ENCODE measurements at regions of chr13 and their contacts with region 1.

Region 1: DNA sequence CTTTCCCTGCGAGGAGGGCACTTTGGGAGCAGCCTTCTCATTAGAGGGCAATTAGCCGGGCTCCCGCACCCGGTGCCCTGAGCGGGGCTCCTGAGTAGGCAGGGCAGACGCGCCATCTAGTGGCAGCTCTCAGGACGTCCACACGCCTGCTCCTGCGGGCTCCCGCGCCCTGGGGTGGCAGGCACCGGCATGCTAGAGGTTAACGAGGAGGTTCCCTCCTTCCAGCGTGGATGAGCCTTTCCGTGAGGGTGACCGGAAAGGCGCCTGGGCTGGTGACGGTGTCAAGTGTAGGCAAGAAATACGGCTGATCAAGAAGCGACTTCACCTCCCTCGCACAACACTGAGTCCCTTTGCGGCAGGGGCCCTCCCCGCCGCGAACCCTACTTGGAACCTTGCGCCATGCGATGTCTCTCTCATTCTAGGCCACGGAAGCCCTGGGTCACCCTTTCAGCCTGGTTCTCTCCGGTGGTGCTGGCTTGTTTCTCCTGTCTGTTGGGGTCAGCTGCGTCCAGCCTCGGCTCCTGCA is 67.7 kb downstream of the ALOX5AP start:
- DNase-seq: peak; percentile 65 to 74 (median 68)
- ATAC-seq: peak; percentile 100
- H3K4me3 ChIP-seq: no peak overlapping the region
- H3K27ac ChIP-seq: no peak overlapping the region
- H3K4me1 ChIP-seq: peaks cover 0 to 6% of the 10 kb centered on the region in 2 experiments; a peak in 2 of 5 replicates
- H3K27me3 ChIP-seq: peaks cover 5 to 35% of the 10 kb centered on the region in 2 experiments; a peak in 4 of 5 replicates
- CTCF ChIP-seq: peak; percentile 73 to 80 (median 75)
- EP300 ChIP-seq: no peak
- POLR2A ChIP-seq: no peak
- RAD21 ChIP-seq: peak; percentile 76 to 86

Region 2: DNA sequence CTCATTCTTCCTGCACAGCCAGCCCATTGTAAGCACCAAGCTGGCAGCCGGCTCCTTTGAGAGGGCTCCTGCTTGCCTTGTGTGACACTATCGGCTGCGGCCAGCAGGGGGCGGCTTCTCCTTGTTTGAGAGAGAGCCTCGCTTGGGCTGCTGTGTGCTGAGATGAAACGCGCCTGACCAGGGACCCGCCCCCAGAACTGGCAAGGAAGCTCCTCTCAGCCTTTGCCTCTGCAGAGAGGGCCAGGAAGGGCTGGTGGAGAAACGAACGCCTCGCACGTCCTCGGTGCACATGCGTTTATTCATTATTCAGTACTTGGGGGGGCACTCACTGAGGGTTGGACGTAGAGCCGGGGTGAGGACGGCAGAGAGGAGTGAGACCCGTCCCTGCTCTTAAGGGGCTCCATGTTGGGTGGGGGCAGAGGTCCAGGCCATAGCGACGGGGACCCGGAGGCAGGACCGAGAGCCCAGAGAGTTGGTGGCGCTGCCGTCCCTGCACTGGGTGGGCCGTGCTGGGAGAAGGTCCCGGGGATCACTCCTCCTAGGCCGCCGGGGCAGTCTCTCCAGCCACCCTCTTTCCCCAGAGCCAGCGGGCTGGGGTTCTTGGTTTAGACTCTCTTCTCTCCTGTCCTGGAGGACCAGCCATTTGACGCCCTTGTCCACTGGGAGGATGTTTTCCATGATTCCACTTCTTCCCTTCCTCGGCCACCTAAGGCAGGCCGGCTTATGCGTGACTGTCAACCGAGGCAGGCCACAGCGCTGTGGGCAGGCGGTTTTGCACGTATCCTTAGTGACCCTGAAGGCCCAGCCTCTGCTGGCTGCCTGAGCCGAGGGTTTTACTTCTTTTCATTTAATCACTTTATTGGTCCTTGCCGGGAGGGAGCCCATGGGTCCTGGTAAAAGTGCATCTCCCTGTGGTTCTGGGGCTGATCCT is 670.1 kb before region 1 on chr13:
- CTCF ChIA-PET with region 1: interaction called, 3 read pairs
- POLR2A ChIA-PET with region 1: no interaction called
- in situ Hi-C with region 1: loop called (anchors 10 kb)
- intact Hi-C with region 1: loop called (anchors 2 kb)
- DNase-seq: peak; percentile 78 to 88 (median 80)
- ATAC-seq: peak; percentile 99
- H3K4me3 ChIP-seq: no peak overlapping the region
- H3K27ac ChIP-seq: no peak overlapping the region
- H3K4me1 ChIP-seq: peaks cover 0 to 12% of the 10 kb centered on the region in 2 experiments; a peak in 3 of 5 replicates
- H3K27me3 ChIP-seq: peaks cover 3 to 27% of the 10 kb centered on the region in 2 experiments; a peak in 2 of 5 replicates
- CTCF ChIP-seq: peak; percentile 81 to 83 (median 81)
- EP300 ChIP-seq: no peak
- POLR2A ChIP-seq: no peak
- RAD21 ChIP-seq: peak; percentile 75 to 86

Region 3: DNA sequence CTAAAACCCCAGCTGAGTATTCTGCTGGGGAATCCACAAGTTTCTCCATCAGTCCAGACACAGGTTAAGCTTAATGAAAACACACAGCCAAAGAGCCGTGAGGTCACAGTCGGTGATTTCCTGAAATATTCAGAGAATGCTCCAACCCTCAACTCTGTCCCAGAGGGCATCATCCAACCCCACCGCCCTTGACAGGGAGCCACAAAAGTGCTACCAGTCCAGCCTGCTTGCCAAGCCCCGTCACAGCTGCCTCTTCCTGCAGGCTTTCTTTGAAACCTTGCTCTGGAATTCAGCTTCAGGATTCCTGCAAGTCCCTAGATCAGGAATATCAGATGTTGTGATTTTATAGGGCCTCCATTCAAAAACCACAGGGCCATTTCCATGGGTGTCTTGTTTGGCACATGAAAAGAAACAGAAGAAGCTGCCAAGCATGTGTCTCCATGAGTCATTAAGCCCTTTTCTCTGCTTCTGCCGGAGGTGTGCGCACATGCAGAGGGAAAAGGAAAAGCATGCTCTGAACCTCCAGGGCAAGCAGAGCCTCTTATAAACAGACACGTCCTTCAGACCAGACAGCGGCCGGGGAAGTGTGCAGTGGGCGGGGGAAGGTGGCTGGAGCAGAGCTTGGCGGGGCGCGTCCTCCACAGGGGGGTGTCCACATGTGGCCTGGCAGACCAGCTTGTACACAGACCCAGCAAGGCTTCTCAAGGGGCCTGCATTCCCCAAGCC is 660.4 kb before region 1 on chr13:
- CTCF ChIA-PET with region 1: no interaction called
- POLR2A ChIA-PET with region 1: no interaction called
- in situ Hi-C with region 1: loop called (anchors 10 kb)
- intact Hi-C with region 1: no loop called
- DNase-seq: no peak
- ATAC-seq: no peak
- H3K4me3 ChIP-seq: no peak overlapping the region
- H3K27ac ChIP-seq: no peak overlapping the region
- H3K4me1 ChIP-seq: no peaks in the 10 kb centered on the region; a peak in 1 of 5 replicates
- H3K27me3 ChIP-seq: peaks cover 5 to 20% of the 10 kb centered on the region in 2 experiments
- CTCF ChIP-seq: no peak
- EP300 ChIP-seq: no peak
- POLR2A ChIP-seq: no peak
- RAD21 ChIP-seq: no peak

Region 4: GRCh38 chr13:30572859-30573275 is 230.1 kb before region 1 on chr13:
- CTCF ChIA-PET with region 1: no interaction called
- POLR2A ChIA-PET with region 1: no interaction called
- in situ Hi-C with region 1: no loop called
- intact Hi-C with region 1: loop called (anchors 5 kb)
- DNase-seq: no peak
- ATAC-seq: 0 out of 3 replicates have a peak, but pooled peaks have one; percentile 40
- H3K4me3 ChIP-seq: no peak overlapping the region
- H3K27ac ChIP-seq: no peak overlapping the region
- H3K4me1 ChIP-seq: peaks cover 0 to 10% of the 10 kb centered on the region in 2 experiments; a peak in 4 of 5 replicates
- H3K27me3 ChIP-seq: no peaks in the 10 kb centered on the region; a peak in 1 of 5 replicates
- CTCF ChIP-seq: peak in 1 of 3 experiments; percentile 29; a peak in 2 of 6 replicates
- EP300 ChIP-seq: no peak
- POLR2A ChIP-seq: no peak
- RAD21 ChIP-seq: peak; percentile 33 to 41; a peak in 3 of 4 replicates

Region 5: GRCh38 chr13:30679483-30680330 is 123.3 kb before region 1 on chr13:
- CTCF ChIA-PET with region 1: no interaction called
- POLR2A ChIA-PET with region 1: no interaction called
- in situ Hi-C with region 1: no loop called
- intact Hi-C with region 1: loop called (anchors 2 kb)
- DNase-seq: no peak
- ATAC-seq: peak; percentile 87
- H3K4me3 ChIP-seq: no peak overlapping the region
- H3K27ac ChIP-seq: no peak overlapping the region
- H3K4me1 ChIP-seq: peaks cover 0 to 4% of the 10 kb centered on the region in 2 experiments; a peak in 1 of 5 replicates
- H3K27me3 ChIP-seq: peaks cover 4% of the 10 kb centered on the region in 2 experiments; a peak in 1 of 5 replicates
- CTCF ChIP-seq: peak; percentile 34 to 42 (median 35); a peak in 5 of 6 replicates
- EP300 ChIP-seq: no peak
- POLR2A ChIP-seq: no peak
- RAD21 ChIP-seq: peak; percentile 32 to 48; a peak in 3 of 4 replicates

Measured in K562 (cell line).